ENCODE measurements at regions of chr2 and their contacts with region 1.

Region 1: GRCh38 chr2:172662099-172662498 is 73.5 kb upstream of the RAPGEF4 start:
- DNase-seq: peak; percentile 28
- ATAC-seq: peak; percentile 29
- H3K4me3 ChIP-seq: no peak overlapping the region
- H3K27ac ChIP-seq: no peak overlapping the region
- H3K4me1 ChIP-seq: no peaks in the 10 kb centered on the region
- H3K27me3 ChIP-seq: no peaks in the 10 kb centered on the region
- CTCF ChIP-seq: peak; percentile 55

Region 2: GRCh38 chr2:172465417-172466334 is 196.4 kb before region 1 on chr2:
- CTCF ChIA-PET with region 1: no interaction called
- POLR2A ChIA-PET with region 1: no interaction called
- intact Hi-C with region 1: no loop called
- DNase-seq: peak; percentile 95
- ATAC-seq: peak; percentile 58
- H3K4me3 ChIP-seq: peak overlapping the region; percentile 58
- H3K27ac ChIP-seq: peak overlapping the region; percentile 73
- H3K4me1 ChIP-seq: peaks cover 49% of the 10 kb centered on the region
- H3K27me3 ChIP-seq: no peaks in the 10 kb centered on the region
- CTCF ChIP-seq: peak; percentile 94

Region 3: DNA sequence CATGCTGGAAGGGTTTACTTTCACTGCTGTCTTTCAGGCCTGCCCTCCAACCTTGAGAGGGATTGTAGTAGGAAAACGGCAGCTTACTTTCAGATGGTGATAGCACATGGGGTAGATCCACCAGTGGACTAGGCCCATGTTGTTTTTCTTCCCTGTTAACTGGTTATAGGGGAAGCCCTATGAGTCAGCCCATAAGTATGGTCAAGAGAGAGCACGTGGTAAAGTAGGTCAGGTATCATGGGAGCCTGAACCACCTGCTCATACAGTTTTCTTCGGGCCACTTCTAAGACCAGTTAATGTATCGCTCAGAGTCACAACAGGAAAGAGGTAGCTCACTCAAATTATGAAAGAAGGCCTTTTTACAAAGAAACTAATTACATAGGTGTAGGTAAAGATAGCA is 73.2 kb before region 1 on chr2:
- CTCF ChIA-PET with region 1: no interaction called
- POLR2A ChIA-PET with region 1: no interaction called
- intact Hi-C with region 1: loop called (anchors 2 kb)
- DNase-seq: peak; percentile 54
- ATAC-seq: peak; percentile 64
- H3K4me3 ChIP-seq: no peak overlapping the region
- H3K27ac ChIP-seq: peak overlapping the region; percentile 34; the same call in 1 of the 2 replicates
- H3K4me1 ChIP-seq: peaks cover 13% of the 10 kb centered on the region
- H3K27me3 ChIP-seq: no peaks in the 10 kb centered on the region
- CTCF ChIP-seq: no peak

Region 4: GRCh38 chr2:173373290-173373689 is 711.2 kb after region 1 on chr2:
- CTCF ChIA-PET with region 1: no interaction called
- POLR2A ChIA-PET with region 1: no interaction called
- intact Hi-C with region 1: no loop called
- DNase-seq: no peak
- ATAC-seq: no peak
- H3K4me3 ChIP-seq: no peak overlapping the region
- H3K27ac ChIP-seq: no peak overlapping the region
- H3K4me1 ChIP-seq: no peaks in the 10 kb centered on the region
- H3K27me3 ChIP-seq: no peaks in the 10 kb centered on the region
- CTCF ChIP-seq: no peak

Measured in PC-3 (cell line).